ENCODE measurements at regions of chr1 and their contacts with region 1.

Region 1: DNA sequence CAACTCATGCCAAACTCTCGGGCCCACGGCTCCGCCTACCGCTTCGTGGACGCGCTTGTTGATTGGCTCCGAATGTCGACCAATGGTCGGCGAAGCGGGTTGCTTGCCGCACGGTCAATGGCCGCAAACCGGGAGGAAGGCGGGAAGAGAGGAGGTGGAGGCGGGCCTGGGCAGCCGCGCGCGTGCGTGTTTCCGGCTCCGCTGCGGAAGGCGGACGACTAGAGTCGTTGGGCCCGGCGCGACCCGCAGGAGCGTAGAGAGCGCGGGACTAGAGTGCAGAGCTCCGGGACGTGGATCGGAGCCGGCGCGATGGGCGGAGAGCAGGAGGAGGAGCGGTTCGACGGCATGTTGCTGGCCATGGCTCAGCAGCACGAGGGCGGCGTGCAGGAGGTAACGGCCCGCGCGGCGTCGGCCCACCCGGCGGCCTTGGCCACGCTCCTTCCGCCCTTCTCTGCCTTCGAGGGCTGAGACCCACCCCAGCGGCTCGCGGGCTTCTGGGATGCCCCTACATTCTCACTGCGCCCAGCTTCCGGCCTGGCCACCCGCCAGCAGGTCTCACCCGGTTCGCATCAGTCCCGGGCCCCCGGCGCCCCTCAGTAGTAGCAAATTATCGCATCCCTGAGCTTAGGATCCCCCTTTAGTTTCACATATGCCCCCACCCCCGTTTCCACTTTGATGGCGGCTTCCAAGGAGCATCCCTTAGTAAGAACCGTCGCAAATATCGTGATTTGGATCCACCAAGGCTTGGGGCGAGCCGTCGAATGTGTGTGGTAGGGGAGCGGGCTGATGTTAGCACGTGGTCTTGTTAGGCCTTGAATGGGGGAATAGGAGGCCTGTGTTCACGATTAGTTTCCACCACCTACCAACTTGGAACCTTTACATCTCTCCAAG is at the start of gene NUDC:
- DNase-seq: peak; percentile 97
- H3K4me3 Mint-ChIP-seq: peak within 1 kb of the TSS; percentile 94
- H3K27ac Mint-ChIP-seq: peak within 1 kb of the TSS; percentile 95
- H3K4me1 Mint-ChIP-seq: peaks cover 28% of the 10 kb centered on the region
- H3K27me3 Mint-ChIP-seq: no peaks in the 10 kb centered on the region
- total RNA-seq, gene NUDC: 133 and 134 TPM in 2 replicates

Region 2: DNA sequence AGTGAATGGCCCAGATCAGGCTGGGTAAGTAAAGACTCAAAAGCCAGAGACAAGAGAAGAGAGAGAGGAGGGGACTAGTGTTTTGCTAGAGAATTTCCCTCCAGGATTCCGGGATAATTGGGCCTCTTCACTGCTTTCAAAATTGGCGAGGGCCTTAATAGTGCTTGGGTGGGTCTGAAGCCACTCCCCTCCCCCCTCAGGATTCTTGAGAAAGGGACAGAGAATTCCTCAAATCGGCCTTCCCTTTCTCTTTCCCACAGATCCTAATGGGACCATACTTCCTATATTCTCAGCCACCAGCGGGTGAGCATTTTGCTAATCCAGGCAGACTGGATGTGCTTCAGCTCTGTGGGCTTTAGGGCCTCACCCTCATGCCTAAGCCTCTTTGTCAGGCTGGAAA is 46.9 kb before region 1 on chr1:
- intact Hi-C with region 1: no loop called
- DNase-seq: no peak
- H3K4me3 Mint-ChIP-seq: no peak overlapping the region
- H3K27ac Mint-ChIP-seq: no peak overlapping the region
- H3K4me1 Mint-ChIP-seq: no peaks in the 10 kb centered on the region
- H3K27me3 Mint-ChIP-seq: no peaks in the 10 kb centered on the region

Region 3: GRCh38 chr1:26900001-26900814 is 21.6 kb before region 1 on chr1 and contains the start of gene GPATCH3:
- intact Hi-C with region 1: loop called (anchors 1 kb)
- DNase-seq: peak; percentile 82
- H3K4me3 Mint-ChIP-seq: peak within 1 kb of the TSS; percentile 95
- H3K27ac Mint-ChIP-seq: peak within 1 kb of the TSS; percentile 97
- H3K4me1 Mint-ChIP-seq: peaks cover 20% of the 10 kb centered on the region
- H3K27me3 Mint-ChIP-seq: no peaks in the 10 kb centered on the region
- total RNA-seq, gene GPATCH3: 12.7 and 14.9 TPM in 2 replicates

Region 4: DNA sequence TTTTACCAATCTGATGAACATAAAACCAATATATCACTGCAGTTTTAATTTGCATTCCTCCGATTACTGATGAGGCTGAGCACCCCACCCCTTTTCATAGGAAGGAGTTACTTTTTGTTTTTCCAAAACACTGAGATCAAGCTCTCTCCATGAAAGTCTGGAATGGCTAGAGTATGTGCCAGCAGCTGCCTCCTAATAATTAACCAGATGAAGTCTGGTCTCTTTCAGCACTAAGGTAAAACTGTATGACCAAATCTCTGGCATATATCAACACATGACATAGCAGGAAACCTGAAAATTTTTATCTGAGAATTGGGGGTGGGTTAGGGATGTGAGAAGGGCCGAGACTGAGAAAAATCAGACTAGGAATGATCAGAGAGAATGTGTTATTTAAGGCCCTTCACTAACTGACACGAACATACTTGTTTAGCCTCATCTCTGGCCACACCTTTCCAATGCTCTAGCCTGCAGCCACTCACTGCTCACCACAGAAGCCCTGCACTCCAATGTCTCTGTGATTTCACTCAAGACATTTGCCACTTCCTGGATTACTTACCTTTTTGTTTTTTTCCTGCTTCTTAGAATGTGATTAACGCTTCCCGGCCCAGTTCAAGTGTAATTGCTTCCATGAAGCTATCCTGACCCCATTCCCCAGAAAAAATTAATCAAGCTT is 533.5 kb after region 1 on chr1:
- intact Hi-C with region 1: no loop called
- DNase-seq: no peak
- H3K4me3 Mint-ChIP-seq: peak overlapping the region; percentile 4
- H3K27ac Mint-ChIP-seq: peak overlapping the region; percentile 67
- H3K4me1 Mint-ChIP-seq: peaks cover 27% of the 10 kb centered on the region
- H3K27me3 Mint-ChIP-seq: no peaks in the 10 kb centered on the region

Measured in activated T-helper 2 cell treated with anti-CD3 and anti-CD28 coated beads, Interferon-gamma antibody, Interleukin-2, Interleukin-4, amounts not matched to agents 10 μg/mL and 5 μg/mL and 100 μg/mL, durations not matched to agents 14 hours and 24 hours and 36 hours (primary cell).